ENCODE measurements at regions of chr10 and their contacts with region 1.

Region 1: DNA sequence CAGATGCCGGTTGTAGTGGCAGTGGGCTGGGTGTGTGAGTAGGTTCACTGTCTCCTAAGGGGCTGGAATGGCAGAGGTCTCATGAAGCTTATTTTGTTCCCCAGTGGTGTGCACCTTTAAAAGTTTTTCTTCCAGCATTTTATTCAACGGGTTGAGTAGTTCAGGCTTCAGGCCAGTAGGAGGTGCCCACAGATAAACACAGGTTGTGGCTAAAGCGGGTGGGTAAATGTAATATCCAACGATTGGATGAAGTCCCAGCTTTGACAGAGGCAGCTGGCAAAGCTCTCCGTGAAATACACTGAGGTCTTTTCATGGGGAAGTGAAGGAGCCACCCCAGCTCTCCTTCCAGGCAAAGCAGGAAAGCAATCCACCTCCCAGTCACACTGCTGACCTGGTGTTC is 339.8 kb upstream of the LRRTM3 start:
- DNase-seq: peak in 1 of 2 experiments; percentile 55
- H3K4me3 ChIP-seq: no peak overlapping the region
- H3K27ac ChIP-seq: no peak overlapping the region
- H3K4me1 ChIP-seq: no peaks in the 10 kb centered on the region; a peak in 1 of 7 replicates
- H3K27me3 ChIP-seq: no peaks in the 10 kb centered on the region
- CTCF ChIP-seq: peak; percentile 24 to 63 (median 51)
- EP300 ChIP-seq: no peak
- POLR2A ChIP-seq: no peak
- RAD21 ChIP-seq: peak; percentile 73 to 77

Region 2: DNA sequence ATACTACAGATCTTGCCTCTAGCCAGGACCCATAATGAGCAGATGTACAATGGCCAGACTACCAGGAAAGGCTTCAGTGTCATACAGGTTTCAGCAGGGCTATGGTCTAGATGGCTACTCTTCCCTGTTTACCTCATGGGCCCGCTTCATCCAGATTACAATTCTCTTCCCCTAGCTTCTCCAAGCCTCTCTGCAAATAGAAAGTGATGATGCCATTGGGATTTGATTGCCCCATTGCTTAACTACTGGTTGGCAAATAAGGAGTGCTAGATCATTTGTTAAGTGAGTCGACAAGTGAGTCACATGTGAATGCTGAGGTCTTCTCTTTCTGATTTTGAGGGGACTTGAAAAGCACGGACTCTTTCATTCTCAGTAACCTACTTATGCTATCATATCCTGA is 21.8 kb before region 1 on chr10:
- CTCF ChIA-PET with region 1: interaction called, 15 read pairs
- POLR2A ChIA-PET with region 1: no interaction called
- DNase-seq: no peak
- H3K4me3 ChIP-seq: no peak overlapping the region
- H3K27ac ChIP-seq: no peak overlapping the region
- H3K4me1 ChIP-seq: no peaks in the 10 kb centered on the region
- H3K27me3 ChIP-seq: no peaks in the 10 kb centered on the region
- CTCF ChIP-seq: no peak
- EP300 ChIP-seq: no peak
- POLR2A ChIP-seq: no peak
- RAD21 ChIP-seq: no peak

Region 3: GRCh38 chr10:66575251-66575855 is 10.7 kb before region 1 on chr10:
- CTCF ChIA-PET with region 1: interaction called, 27 read pairs
- POLR2A ChIA-PET with region 1: no interaction called
- DNase-seq: no peak
- H3K4me3 ChIP-seq: no peak overlapping the region
- H3K27ac ChIP-seq: no peak overlapping the region
- H3K4me1 ChIP-seq: peaks cover 0 to 2% (median 0%) of the 10 kb centered on the region in 4 experiments; a peak in 1 of 7 replicates
- H3K27me3 ChIP-seq: no peaks in the 10 kb centered on the region
- CTCF ChIP-seq: no peak
- EP300 ChIP-seq: no peak
- POLR2A ChIP-seq: no peak
- RAD21 ChIP-seq: no peak

Region 4: GRCh38 chr10:66604195-66604594 is 18.1 kb after region 1 on chr10:
- CTCF ChIA-PET with region 1: interaction called, 10 read pairs
- POLR2A ChIA-PET with region 1: no interaction called
- DNase-seq: peak in 1 of 2 experiments; percentile 37
- H3K4me3 ChIP-seq: no peak overlapping the region
- H3K27ac ChIP-seq: no peak overlapping the region
- H3K4me1 ChIP-seq: no peaks in the 10 kb centered on the region
- H3K27me3 ChIP-seq: no peaks in the 10 kb centered on the region
- CTCF ChIP-seq: peak; percentile 14 to 30 (median 29); a peak in 3 of 4 replicates
- EP300 ChIP-seq: no peak
- POLR2A ChIP-seq: no peak
- RAD21 ChIP-seq: peak; percentile 20 to 27; a peak in 3 of 4 replicates

Region 5: GRCh38 chr10:66852811-66853210 is 266.7 kb after region 1 on chr10:
- CTCF ChIA-PET with region 1: no interaction called
- POLR2A ChIA-PET with region 1: no interaction called
- DNase-seq: no peak
- H3K4me3 ChIP-seq: no peak overlapping the region
- H3K27ac ChIP-seq: no peak overlapping the region
- H3K4me1 ChIP-seq: no peaks in the 10 kb centered on the region
- H3K27me3 ChIP-seq: no peaks in the 10 kb centered on the region
- CTCF ChIP-seq: no peak
- EP300 ChIP-seq: no peak
- POLR2A ChIP-seq: no peak
- RAD21 ChIP-seq: no peak

Region 6: DNA sequence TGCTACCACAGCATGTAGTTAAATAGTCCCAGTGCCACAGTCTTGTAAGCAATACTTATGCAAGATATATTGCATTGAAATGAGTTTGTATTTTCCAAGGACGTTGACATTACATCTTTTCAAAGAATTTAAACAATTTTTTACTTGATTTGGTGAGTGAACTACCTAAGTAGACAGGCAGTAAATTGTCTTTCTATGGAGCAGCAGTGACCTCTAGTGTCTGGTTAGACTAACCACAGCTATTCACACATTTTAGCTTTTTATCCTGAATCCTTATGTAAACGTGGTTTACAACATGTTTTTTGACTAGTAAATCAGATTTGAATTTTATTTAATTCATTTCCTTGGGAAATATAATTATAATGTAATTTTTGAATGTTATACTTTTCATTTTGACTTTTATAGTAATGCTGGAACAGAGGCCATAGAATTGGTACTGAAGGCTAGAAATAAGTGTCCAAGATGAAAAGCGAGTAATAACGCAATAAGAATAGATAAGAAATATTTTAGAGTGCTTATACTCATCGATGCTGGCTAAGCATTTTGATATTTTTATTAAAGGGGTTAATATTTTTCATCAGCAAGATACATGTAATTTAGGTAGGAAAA is 345.4 kb after region 1 on chr10:
- CTCF ChIA-PET with region 1: interaction called, 10 read pairs
- POLR2A ChIA-PET with region 1: no interaction called
- DNase-seq: no peak
- H3K4me3 ChIP-seq: no peak overlapping the region
- H3K27ac ChIP-seq: no peak overlapping the region
- H3K4me1 ChIP-seq: peaks cover 2 to 16% (median 11%) of the 10 kb centered on the region in 4 experiments
- H3K27me3 ChIP-seq: peaks cover 0 to 21% (median 18%) of the 10 kb centered on the region in 4 experiments; a peak in 6 of 7 replicates
- CTCF ChIP-seq: peak in 2 of 3 experiments; percentile 51 to 66; a peak in 2 of 4 replicates
- EP300 ChIP-seq: no peak
- POLR2A ChIP-seq: no peak
- RAD21 ChIP-seq: peak; percentile 92 to 94

Measured in H1 (cell line).